Activated CD4-positive, alpha-beta memory T cell treated with anti-CD3 and anti-CD28 coated beads for 36 hours (primary cell): ENCODE measurements at regions of chr2 and their contacts with region 1.

Region 1: GRCh38 chr2:12501469-12502158 is 215.1 kb upstream of the TRIB2 start:
- DNase-seq: peak; percentile 89
- H3K4me3 Mint-ChIP-seq: peak overlapping the region; percentile 17
- H3K27ac Mint-ChIP-seq: peak overlapping the region; percentile 71
- H3K4me1 Mint-ChIP-seq: peaks cover 92% of the 10 kb centered on the region
- H3K27me3 Mint-ChIP-seq: no peaks in the 10 kb centered on the region

Region 2: DNA sequence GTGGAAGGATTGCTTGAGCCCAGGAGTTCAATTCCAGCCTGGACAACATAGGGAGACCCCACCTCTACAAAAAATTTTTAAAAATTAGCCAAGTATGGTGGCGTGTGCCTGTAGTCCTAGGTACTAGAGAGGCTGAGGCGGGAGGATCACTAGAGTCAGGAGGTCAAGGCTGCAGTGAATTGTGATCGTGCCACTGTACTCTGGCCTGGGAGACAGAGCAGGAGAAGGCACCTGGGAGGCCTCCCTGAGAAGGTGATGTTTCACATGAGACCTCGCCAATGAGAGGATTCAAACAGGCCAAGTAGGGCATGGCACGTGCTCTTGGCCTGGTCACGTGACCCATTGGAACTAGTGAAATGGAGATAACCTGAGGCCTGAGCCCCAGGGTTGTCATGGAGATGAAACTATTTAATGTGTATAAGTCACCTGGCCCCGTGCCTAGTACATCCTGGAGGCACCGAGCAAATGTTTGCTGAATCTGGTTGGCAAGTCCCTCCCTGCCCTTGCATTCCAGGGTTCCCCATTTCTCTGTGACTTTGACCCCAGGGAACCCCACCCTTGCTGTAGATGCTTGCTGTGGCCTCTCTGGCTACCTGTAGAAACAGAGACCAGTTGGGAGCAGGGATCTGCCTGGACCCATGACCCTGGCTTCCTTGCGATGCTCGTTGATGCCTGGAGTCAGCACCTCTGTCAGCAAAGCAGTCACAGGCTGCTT is 1131.1 kb before region 1 on chr2:
- CTCF ChIA-PET with region 1: no interaction called
- POLR2A ChIA-PET with region 1: no interaction called
- intact Hi-C with region 1: no loop called
- DNase-seq: no peak
- H3K4me3 Mint-ChIP-seq: no peak overlapping the region
- H3K27ac Mint-ChIP-seq: no peak overlapping the region
- H3K4me1 Mint-ChIP-seq: no peaks in the 10 kb centered on the region
- H3K27me3 Mint-ChIP-seq: no peaks in the 10 kb centered on the region

Region 3: GRCh38 chr2:11829947-11830707 is 671.5 kb before region 1 on chr2:
- CTCF ChIA-PET with region 1: no interaction called
- POLR2A ChIA-PET with region 1: no interaction called
- intact Hi-C with region 1: loop called (anchors 1 kb)
- DNase-seq: peak; percentile 74
- H3K4me3 Mint-ChIP-seq: peak overlapping the region; percentile 49
- H3K27ac Mint-ChIP-seq: peak overlapping the region; percentile 72
- H3K4me1 Mint-ChIP-seq: peaks cover 41% of the 10 kb centered on the region
- H3K27me3 Mint-ChIP-seq: peaks cover 32% of the 10 kb centered on the region

Region 4: GRCh38 chr2:12416600-12416999 is 85.0 kb before region 1 on chr2:
- CTCF ChIA-PET with region 1: interaction called, 4 read pairs
- POLR2A ChIA-PET with region 1: no interaction called
- intact Hi-C with region 1: loop called (anchors 2 kb)
- DNase-seq: peak; percentile 69
- H3K4me3 Mint-ChIP-seq: no peak overlapping the region
- H3K27ac Mint-ChIP-seq: no peak overlapping the region
- H3K4me1 Mint-ChIP-seq: peaks cover 43% of the 10 kb centered on the region
- H3K27me3 Mint-ChIP-seq: no peaks in the 10 kb centered on the region

Region 5: GRCh38 chr2:12456293-12457151 is 45.1 kb before region 1 on chr2:
- CTCF ChIA-PET with region 1: no interaction called
- POLR2A ChIA-PET with region 1: no interaction called
- intact Hi-C with region 1: loop called (anchors 1 kb)
- DNase-seq: peak; percentile 79
- H3K4me3 Mint-ChIP-seq: peak overlapping the region; percentile 70
- H3K27ac Mint-ChIP-seq: peak overlapping the region; percentile 91
- H3K4me1 Mint-ChIP-seq: peaks cover 36% of the 10 kb centered on the region
- H3K27me3 Mint-ChIP-seq: no peaks in the 10 kb centered on the region

Region 6: GRCh38 chr2:12555012-12555645 is 53.5 kb after region 1 on chr2:
- CTCF ChIA-PET with region 1: no interaction called
- POLR2A ChIA-PET with region 1: interaction called, 4 read pairs
- intact Hi-C with region 1: loop called (anchors 1 kb)
- DNase-seq: peak; percentile 52
- H3K4me3 Mint-ChIP-seq: peak overlapping the region; percentile 21
- H3K27ac Mint-ChIP-seq: peak overlapping the region; percentile 80
- H3K4me1 Mint-ChIP-seq: peaks cover 40% of the 10 kb centered on the region
- H3K27me3 Mint-ChIP-seq: no peaks in the 10 kb centered on the region

Region 7: GRCh38 chr2:12819103-12819475 is 317.5 kb after region 1 on chr2:
- CTCF ChIA-PET with region 1: no interaction called
- POLR2A ChIA-PET with region 1: no interaction called
- intact Hi-C with region 1: loop called (anchors 5 kb)
- DNase-seq: no peak
- H3K4me3 Mint-ChIP-seq: no peak overlapping the region
- H3K27ac Mint-ChIP-seq: no peak overlapping the region
- H3K4me1 Mint-ChIP-seq: peaks cover 54% of the 10 kb centered on the region
- H3K27me3 Mint-ChIP-seq: no peaks in the 10 kb centered on the region